ENCODE measurements at regions of chr1 and their contacts with region 1.

Region 1: DNA sequence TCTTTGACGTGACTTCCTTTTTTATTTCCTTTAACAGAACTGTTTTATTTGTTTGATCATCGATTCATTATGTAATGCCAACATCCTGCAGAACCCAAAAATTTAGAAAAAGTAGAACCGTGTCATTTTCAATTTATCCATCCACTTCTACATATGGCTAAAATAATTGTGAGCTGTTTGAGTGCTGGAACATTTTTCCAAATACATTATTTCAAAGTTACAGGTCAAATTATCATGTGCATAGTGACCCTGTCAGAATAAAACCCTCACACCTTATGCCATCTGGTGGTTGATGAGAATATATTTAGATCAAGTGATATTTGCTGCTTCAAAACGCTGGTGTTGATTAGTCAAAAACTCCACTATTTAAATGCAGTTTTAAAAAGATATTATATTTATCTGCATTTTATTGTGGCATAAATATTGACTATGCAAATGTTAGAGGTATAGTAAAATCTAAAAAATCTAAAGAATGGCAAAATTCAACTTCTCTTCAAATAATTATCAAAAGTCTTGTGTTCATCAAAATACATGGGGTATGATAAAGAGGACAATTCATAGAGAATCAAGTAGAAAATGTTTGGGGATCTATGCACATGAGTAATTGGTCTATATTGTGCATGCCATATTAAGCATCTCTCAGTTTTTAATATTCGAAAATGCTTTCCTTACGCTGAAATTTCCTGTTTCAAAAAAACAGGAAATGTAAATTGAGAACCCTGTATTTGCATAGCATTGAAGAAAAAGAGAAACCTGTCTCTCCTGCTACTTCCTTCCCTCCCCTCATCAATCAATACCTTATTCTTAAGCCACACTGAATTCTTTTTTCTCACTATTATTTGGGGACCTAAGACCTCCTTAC is 39.7 kb downstream of the UBE2U start:
- DNase-seq: no peak
- H3K4me3 Mint-ChIP-seq: peak overlapping the region; percentile 40
- H3K27ac Mint-ChIP-seq: no peak overlapping the region
- H3K4me1 Mint-ChIP-seq: peaks cover 11% of the 10 kb centered on the region
- H3K27me3 Mint-ChIP-seq: peaks cover 11% of the 10 kb centered on the region

Region 2: GRCh38 chr1:63327417-63328139 is 915.5 kb before region 1 on chr1:
- intact Hi-C with region 1: loop called (anchors 5 kb)
- DNase-seq: peak; percentile 37
- H3K4me3 Mint-ChIP-seq: peak overlapping the region; percentile 17
- H3K27ac Mint-ChIP-seq: peak overlapping the region; percentile 72
- H3K4me1 Mint-ChIP-seq: peaks cover 17% of the 10 kb centered on the region
- H3K27me3 Mint-ChIP-seq: peaks cover 78% of the 10 kb centered on the region

Region 3: GRCh38 chr1:63575340-63575826 is 667.7 kb before region 1 on chr1:
- intact Hi-C with region 1: loop called (anchors 1 kb)
- DNase-seq: no peak
- H3K4me3 Mint-ChIP-seq: no peak overlapping the region
- H3K27ac Mint-ChIP-seq: no peak overlapping the region
- H3K4me1 Mint-ChIP-seq: no peaks in the 10 kb centered on the region
- H3K27me3 Mint-ChIP-seq: no peaks in the 10 kb centered on the region

Region 4: GRCh38 chr1:63691701-63692425 is 551.3 kb before region 1 on chr1:
- intact Hi-C with region 1: loop called (anchors 1 kb)
- DNase-seq: peak; percentile 4
- H3K4me3 Mint-ChIP-seq: no peak overlapping the region
- H3K27ac Mint-ChIP-seq: no peak overlapping the region
- H3K4me1 Mint-ChIP-seq: peaks cover 6% of the 10 kb centered on the region
- H3K27me3 Mint-ChIP-seq: no peaks in the 10 kb centered on the region

Region 5: GRCh38 chr1:64136752-64137411 is 106.2 kb before region 1 on chr1:
- intact Hi-C with region 1: loop called (anchors 1 kb)
- DNase-seq: peak; percentile 40
- H3K4me3 Mint-ChIP-seq: no peak overlapping the region
- H3K27ac Mint-ChIP-seq: no peak overlapping the region
- H3K4me1 Mint-ChIP-seq: no peaks in the 10 kb centered on the region
- H3K27me3 Mint-ChIP-seq: peaks cover 2% of the 10 kb centered on the region

Region 6: GRCh38 chr1:64268653-64269557 is 25.8 kb after region 1 on chr1:
- intact Hi-C with region 1: no loop called
- DNase-seq: peak; percentile 25
- H3K4me3 Mint-ChIP-seq: no peak overlapping the region
- H3K27ac Mint-ChIP-seq: no peak overlapping the region
- H3K4me1 Mint-ChIP-seq: no peaks in the 10 kb centered on the region
- H3K27me3 Mint-ChIP-seq: peaks cover 5% of the 10 kb centered on the region

Region 7: GRCh38 chr1:64766385-64766784 is 523.3 kb after region 1 on chr1:
- intact Hi-C with region 1: no loop called
- DNase-seq: no peak
- H3K4me3 Mint-ChIP-seq: no peak overlapping the region
- H3K27ac Mint-ChIP-seq: no peak overlapping the region
- H3K4me1 Mint-ChIP-seq: no peaks in the 10 kb centered on the region
- H3K27me3 Mint-ChIP-seq: peaks cover 2% of the 10 kb centered on the region

Measured in activated T-helper 1 cell treated with anti-CD3 and anti-CD28 coated beads, Interleukin-12 subunit alpha, Interleukin-12 subunit beta, Interleukin-2, Interleukin-4 antibody, amounts not matched to agents 30 ng/mL and 10 ng/mL and 1 ng/mL, durations not matched to agents 14 hours and 24 hours and 36 hours (primary cell).